ENCODE measurements at regions of chr17 and their contacts with region 1.

Region 1: DNA sequence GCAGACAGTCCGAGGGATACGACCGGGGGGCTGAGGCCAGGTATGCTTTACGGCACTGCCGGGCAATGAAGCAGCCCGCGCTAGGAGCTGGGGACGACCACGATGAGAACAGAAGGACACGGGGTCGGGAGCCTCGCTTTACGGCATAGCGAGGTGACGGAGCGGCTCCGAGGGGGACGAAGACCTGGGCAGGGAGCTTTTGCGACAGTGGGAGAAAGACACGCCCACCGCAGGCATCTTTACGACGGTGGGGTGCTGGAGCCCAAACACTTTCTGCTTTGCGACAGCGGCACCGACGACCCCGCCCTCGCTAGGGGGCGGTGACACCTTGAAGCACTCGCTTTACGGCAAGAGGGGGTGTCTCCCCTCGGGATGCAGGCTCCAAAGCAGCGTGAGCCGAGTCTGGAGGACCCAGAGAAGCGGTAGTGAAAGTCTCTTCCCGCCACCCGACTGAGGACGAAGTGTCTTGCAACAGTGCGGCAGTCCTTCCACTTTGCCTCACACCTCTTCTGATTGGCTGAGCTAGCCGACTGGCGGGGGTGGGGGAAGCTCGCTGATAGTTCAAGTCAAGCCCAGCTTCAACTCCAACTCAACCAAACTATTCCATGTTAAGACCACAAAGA is 350 bp upstream of the NEURL4 start:
- DNase-seq: peak; percentile 95 to 98 (median 96)
- H3K4me3 ChIP-seq: peak overlapping the region; percentile 69 to 100 (median 94)
- H3K27ac ChIP-seq: peak overlapping the region; percentile 65 to 98 (median 92)
- H3K27me3 ChIP-seq: no peaks in the 10 kb centered on the region
- CTCF ChIP-seq: peak in 36 of 56 donors; percentile 8 to 57 (median 32)

Region 2: GRCh38 chr17:7306911-7307686 is 22.4 kb before region 1 on chr17 and contains the start of gene EIF5A:
- intact Hi-C with region 1: loop called (anchors 1 to 2 kb)
- DNase-seq: peak; percentile 98 to 99 (median 99)
- H3K4me3 ChIP-seq: peak within 1 kb of the TSS; percentile 62 to 93 (median 84)
- H3K27ac ChIP-seq: peak within 1 kb of the TSS; percentile 73 to 99 (median 98)
- H3K27me3 ChIP-seq: no peaks in the 10 kb centered on the region
- CTCF ChIP-seq: peak in 9 of 56 donors; percentile 0 to 31 (median 12)
- total RNA-seq, gene EIF5A: 117 to 216 (median 169) TPM

Region 3: GRCh38 chr17:7314719-7315569 is 14.5 kb before region 1 on chr17 and contains the start of gene GPS2:
- intact Hi-C with region 1: loop called in 1 of 2 experiments (anchors 1 kb)
- DNase-seq: peak; percentile 90 to 97 (median 93)
- H3K4me3 ChIP-seq: peak within 1 kb of the TSS; percentile 47 to 97 (median 89)
- H3K27ac ChIP-seq: peak within 1 kb of the TSS; percentile 32 to 99 (median 94)
- H3K27me3 ChIP-seq: no peaks in the 10 kb centered on the region
- CTCF ChIP-seq: peak in 21 of 56 donors; percentile 4 to 42 (median 18)
- total RNA-seq, gene GPS2: 46.2 to 97.3 (median 64.4) TPM

Region 4: GRCh38 chr17:7344399-7344798 is 14.9 kb after region 1 on chr17:
- intact Hi-C with region 1: loop called in 1 of 2 experiments (anchors 2 kb)
- DNase-seq: no peak
- H3K4me3 ChIP-seq: no peak overlapping the region
- H3K27ac ChIP-seq: no peak overlapping the region
- H3K27me3 ChIP-seq: no peaks in the 10 kb centered on the region
- CTCF ChIP-seq: no peak

Measured in dorsolateral prefrontal cortex (tissue), 120 donors.